ENCODE measurements at regions of chr12 and their contacts with region 1.

Region 1: DNA sequence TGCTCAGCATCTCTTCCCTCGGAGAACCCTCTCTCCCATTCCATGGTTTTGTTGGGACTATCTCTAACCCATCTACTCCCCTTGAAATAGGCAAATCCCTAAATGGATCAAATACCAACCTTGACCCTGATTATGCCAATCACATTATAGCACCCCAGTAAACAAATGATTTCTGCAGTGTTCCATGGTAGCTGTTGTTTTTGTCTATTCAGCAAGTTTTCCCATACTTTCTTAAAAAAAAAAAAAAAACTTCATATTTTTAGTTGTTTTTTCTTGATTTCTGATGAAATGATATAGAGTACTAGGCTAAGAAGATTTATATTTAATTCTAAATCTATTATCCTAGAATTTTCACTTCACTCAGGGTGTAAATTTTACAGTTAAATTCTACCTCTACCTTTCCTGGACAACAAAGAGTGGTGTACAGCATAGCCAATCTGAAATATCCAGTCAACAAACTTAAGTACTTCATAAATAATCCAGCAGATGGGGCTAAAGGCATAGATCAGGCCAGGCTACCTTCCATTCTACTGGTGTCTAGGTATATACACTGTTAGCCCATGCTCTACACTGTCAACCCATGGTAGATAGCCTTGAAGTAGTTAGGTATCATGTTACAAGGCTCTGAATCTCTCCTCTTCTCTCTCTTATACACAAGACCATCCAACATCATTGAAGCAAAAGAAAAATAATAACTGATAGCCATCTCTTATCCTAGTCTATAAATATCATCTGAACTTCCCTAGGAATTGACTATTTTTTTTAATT is 82.2 kb downstream of the PLEKHG7 start:
- DNase-seq: peak; percentile 55 to 80
- H3K4me3 ChIP-seq: no peak overlapping the region
- H3K4me3 Mint-ChIP-seq: no peak overlapping the region
- H3K27ac Mint-ChIP-seq: no peak overlapping the region
- H3K4me1 ChIP-seq: no peaks in the 10 kb centered on the region
- H3K4me1 Mint-ChIP-seq: peaks cover 8% of the 10 kb centered on the region
- H3K27me3 ChIP-seq: no peaks in the 10 kb centered on the region
- H3K27me3 Mint-ChIP-seq: no peaks in the 10 kb centered on the region
- CTCF ChIP-seq: peak; percentile 45 to 64

Region 2: GRCh38 chr12:92608151-92609091 is 176.6 kb before region 1 on chr12:
- CTCF ChIA-PET with region 1: no interaction called
- POLR2A ChIA-PET with region 1: no interaction called
- intact Hi-C with region 1: no loop called
- DNase-seq: peak; percentile 34 to 46
- H3K4me3 ChIP-seq: no peak overlapping the region
- H3K4me3 Mint-ChIP-seq: no peak overlapping the region
- H3K27ac Mint-ChIP-seq: no peak overlapping the region
- H3K4me1 ChIP-seq: peaks cover 2% of the 10 kb centered on the region
- H3K4me1 Mint-ChIP-seq: no peaks in the 10 kb centered on the region
- H3K27me3 ChIP-seq: no peaks in the 10 kb centered on the region
- H3K27me3 Mint-ChIP-seq: no peaks in the 10 kb centered on the region
- CTCF ChIP-seq: peak; percentile 39 to 70

Region 3: GRCh38 chr12:92928962-92929915 is 144.3 kb after region 1 on chr12 and contains the start of gene EEA1:
- CTCF ChIA-PET with region 1: no interaction called
- POLR2A ChIA-PET with region 1: no interaction called
- intact Hi-C with region 1: loop called (anchors 5 kb)
- DNase-seq: peak; percentile 97 to 98
- H3K4me3 ChIP-seq: peak within 1 kb of the TSS; percentile 88
- H3K4me3 Mint-ChIP-seq: peak within 1 kb of the TSS; percentile 90
- H3K27ac Mint-ChIP-seq: peak within 1 kb of the TSS; percentile 93
- H3K4me1 ChIP-seq: peaks cover 54% of the 10 kb centered on the region
- H3K4me1 Mint-ChIP-seq: peaks cover 50% of the 10 kb centered on the region
- H3K27me3 ChIP-seq: no peaks in the 10 kb centered on the region
- H3K27me3 Mint-ChIP-seq: no peaks in the 10 kb centered on the region
- CTCF ChIP-seq: peak in 1 of 2 experiments; percentile 12
- total RNA-seq, gene EEA1: 68.9 TPM in 2 replicates

Region 4: GRCh38 chr12:92943482-92944250 is 158.7 kb after region 1 on chr12:
- CTCF ChIA-PET with region 1: no interaction called
- POLR2A ChIA-PET with region 1: no interaction called
- intact Hi-C with region 1: loop called (anchors 2 kb)
- DNase-seq: no peak
- H3K4me3 ChIP-seq: no peak overlapping the region
- H3K4me3 Mint-ChIP-seq: no peak overlapping the region
- H3K27ac Mint-ChIP-seq: peak overlapping the region; percentile 80
- H3K4me1 ChIP-seq: peaks cover 43% of the 10 kb centered on the region
- H3K4me1 Mint-ChIP-seq: peaks cover 16% of the 10 kb centered on the region
- H3K27me3 ChIP-seq: no peaks in the 10 kb centered on the region
- H3K27me3 Mint-ChIP-seq: no peaks in the 10 kb centered on the region
- CTCF ChIP-seq: peak; percentile 12

Region 5: GRCh38 chr12:92995258-92995903 is 210.4 kb after region 1 on chr12:
- CTCF ChIA-PET with region 1: no interaction called
- POLR2A ChIA-PET with region 1: no interaction called
- intact Hi-C with region 1: no loop called
- DNase-seq: no peak
- H3K4me3 ChIP-seq: no peak overlapping the region
- H3K4me3 Mint-ChIP-seq: no peak overlapping the region
- H3K27ac Mint-ChIP-seq: no peak overlapping the region
- H3K4me1 ChIP-seq: peaks cover 19% of the 10 kb centered on the region
- H3K4me1 Mint-ChIP-seq: peaks cover 28% of the 10 kb centered on the region
- H3K27me3 ChIP-seq: no peaks in the 10 kb centered on the region
- H3K27me3 Mint-ChIP-seq: no peaks in the 10 kb centered on the region
- CTCF ChIP-seq: no peak

Region 6: GRCh38 chr12:93008044-93008778 is 223.2 kb after region 1 on chr12:
- CTCF ChIA-PET with region 1: no interaction called
- POLR2A ChIA-PET with region 1: no interaction called
- intact Hi-C with region 1: loop called (anchors 5 kb)
- DNase-seq: no peak
- H3K4me3 ChIP-seq: peak overlapping the region; percentile 41
- H3K4me3 Mint-ChIP-seq: peak overlapping the region; percentile 90
- H3K27ac Mint-ChIP-seq: peak overlapping the region; percentile 94
- H3K4me1 ChIP-seq: peaks cover 72% of the 10 kb centered on the region
- H3K4me1 Mint-ChIP-seq: peaks cover 43% of the 10 kb centered on the region
- H3K27me3 ChIP-seq: no peaks in the 10 kb centered on the region
- H3K27me3 Mint-ChIP-seq: no peaks in the 10 kb centered on the region
- CTCF ChIP-seq: no peak

Region 7: DNA sequence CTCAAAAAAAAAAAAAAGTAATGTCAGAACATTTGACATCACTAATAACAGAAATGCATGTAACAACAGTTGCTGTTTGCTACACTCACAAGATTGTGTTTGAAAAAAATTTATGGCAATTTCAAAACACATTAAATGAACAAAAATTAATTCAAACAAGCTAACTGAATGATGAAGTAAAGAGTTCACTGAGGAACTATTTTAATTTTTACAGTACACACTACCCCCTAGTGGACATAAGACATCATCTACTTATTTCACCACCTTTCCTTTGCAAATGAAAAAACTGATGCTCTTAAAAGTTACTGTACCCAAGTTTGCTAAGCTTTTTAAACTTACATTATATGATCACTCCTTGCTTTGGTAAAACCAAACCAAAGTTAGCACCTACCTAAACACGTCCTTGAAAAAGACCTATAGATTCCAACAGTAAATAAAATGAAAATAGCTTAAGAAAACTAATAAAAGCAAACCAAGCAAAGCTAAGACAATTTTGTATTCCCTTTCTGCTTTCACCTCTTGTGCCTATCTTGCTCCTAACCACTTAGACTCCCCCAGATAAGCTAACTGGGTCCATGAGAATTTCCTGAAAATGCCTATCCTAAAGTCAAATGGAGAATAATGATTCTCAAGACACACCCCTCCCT is 634.5 kb after region 1 on chr12:
- CTCF ChIA-PET with region 1: interaction called, 5 read pairs
- POLR2A ChIA-PET with region 1: no interaction called
- intact Hi-C with region 1: loop called (anchors 1 kb)
- DNase-seq: no peak
- H3K4me3 ChIP-seq: no peak overlapping the region
- H3K4me3 Mint-ChIP-seq: no peak overlapping the region
- H3K27ac Mint-ChIP-seq: no peak overlapping the region
- H3K4me1 ChIP-seq: peaks cover 4% of the 10 kb centered on the region; the same call in 1 of the 2 replicates
- H3K4me1 Mint-ChIP-seq: peaks cover 16% of the 10 kb centered on the region
- H3K27me3 ChIP-seq: no peaks in the 10 kb centered on the region
- H3K27me3 Mint-ChIP-seq: no peaks in the 10 kb centered on the region
- CTCF ChIP-seq: peak; percentile 50 to 68